ENCODE measurements at regions of chr3 and their contacts with region 1.

Region 1: GRCh38 chr3:56702490-56703315 is 19.6 kb upstream of the TASOR start:
- DNase-seq: no peak
- ATAC-seq: peak; percentile 87
- H3K4me3 ChIP-seq: no peak overlapping the region
- H3K27ac ChIP-seq: no peak overlapping the region
- H3K4me1 ChIP-seq: no peaks in the 10 kb centered on the region
- H3K27me3 ChIP-seq: no peaks in the 10 kb centered on the region
- CTCF ChIP-seq: peak; percentile 86

Region 2: GRCh38 chr3:56801662-56802377 is 99.1 kb after region 1 on chr3 and contains the start of gene ARHGEF3:
- intact Hi-C with region 1: loop called (anchors 5 kb)
- DNase-seq: peak; percentile 95
- ATAC-seq: peak; percentile 97
- H3K4me3 ChIP-seq: peak within 1 kb of the TSS; percentile 89
- H3K27ac ChIP-seq: peak within 1 kb of the TSS; percentile 77
- H3K4me1 ChIP-seq: peaks cover 30% of the 10 kb centered on the region
- H3K27me3 ChIP-seq: no peaks in the 10 kb centered on the region
- CTCF ChIP-seq: peak; percentile 56
- total RNA-seq, gene ARHGEF3: 37.5 TPM

Region 3: GRCh38 chr3:56988458-56989168 is 285.9 kb after region 1 on chr3:
- intact Hi-C with region 1: loop called (anchors 5 kb)
- DNase-seq: no peak
- ATAC-seq: peak; percentile 89
- H3K4me3 ChIP-seq: no peak overlapping the region
- H3K27ac ChIP-seq: no peak overlapping the region
- H3K4me1 ChIP-seq: no peaks in the 10 kb centered on the region
- H3K27me3 ChIP-seq: no peaks in the 10 kb centered on the region
- CTCF ChIP-seq: peak; percentile 80

Measured in upper lobe of right lung (tissue), 1 donor.